ENCODE measurements at regions of chr18 and their contacts with region 1.

Region 1: DNA sequence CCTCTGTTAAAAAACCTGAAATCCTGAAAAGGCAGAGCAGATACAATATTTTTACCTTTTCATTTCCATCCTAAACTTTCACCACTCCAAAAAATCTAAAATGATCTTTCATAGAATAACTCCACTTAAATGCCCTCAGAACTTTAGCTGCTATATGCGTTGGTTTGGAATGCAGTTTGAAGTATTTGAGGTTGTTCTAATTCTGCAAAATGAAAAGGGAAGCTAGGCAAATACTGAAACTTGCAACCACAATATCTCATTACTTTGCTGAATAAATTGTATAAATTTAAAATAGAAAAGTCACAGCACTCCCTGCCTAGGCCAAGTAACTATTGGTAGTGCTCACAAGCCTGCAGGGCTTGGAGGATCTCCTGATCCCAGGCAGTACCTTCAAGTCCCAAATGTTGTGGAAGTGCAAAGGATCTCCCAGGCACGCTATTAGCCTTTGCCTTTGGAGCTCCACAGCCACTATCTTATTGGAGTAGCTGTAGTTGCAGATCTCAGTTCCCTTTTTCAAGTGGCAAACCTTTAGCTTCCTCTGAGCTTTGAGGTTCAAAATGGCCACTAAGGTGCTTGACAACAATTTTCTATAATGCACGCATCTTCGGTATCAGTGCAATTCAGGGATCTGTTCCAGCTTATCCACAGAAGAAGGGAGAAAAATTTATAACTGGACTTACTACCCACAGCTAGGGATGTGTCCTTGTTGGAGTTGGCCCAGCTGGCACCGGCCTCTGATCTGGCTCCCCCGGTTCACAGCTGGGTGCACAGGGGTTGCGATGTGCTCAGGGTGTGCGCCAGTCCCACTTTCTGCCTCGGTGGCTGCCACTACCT is 43.4 kb upstream of the ANKRD62 start:
- DNase-seq: peak; percentile 52
- CTCF ChIP-seq: no peak

Region 2: GRCh38 chr18:12038639-12039417 is 11.4 kb before region 1 on chr18:
- CTCF ChIA-PET with region 1: interaction called, 34 read pairs
- POLR2A ChIA-PET with region 1: no interaction called
- DNase-seq: peak; percentile 86
- CTCF ChIP-seq: peak; percentile 99

Measured in GM10248 (cell line).